WTC11 (cell line): ENCODE measurements at regions of chr10 and their contacts with region 1.

Region 1: GRCh38 chr10:102384053-102384452 is 11.5 kb upstream of the NFKB2 start:
- DNase-seq: peak; percentile 72
- ATAC-seq: peak; percentile 93
- H3K4me3 Mint-ChIP-seq: no peak overlapping the region
- H3K27ac Mint-ChIP-seq: no peak overlapping the region
- H3K4me1 Mint-ChIP-seq: no peaks in the 10 kb centered on the region
- H3K27me3 Mint-ChIP-seq: no peaks in the 10 kb centered on the region; the same call in 1 of the 2 replicates
- CTCF ChIP-seq: no peak

Region 2: GRCh38 chr10:102316421-102316820 is 67.6 kb before region 1 on chr10:
- CTCF ChIA-PET with region 1: no interaction called
- POLR2A ChIA-PET with region 1: no interaction called
- DNase-seq: no peak
- ATAC-seq: no peak
- H3K4me3 Mint-ChIP-seq: no peak overlapping the region
- H3K27ac Mint-ChIP-seq: no peak overlapping the region
- H3K4me1 Mint-ChIP-seq: peaks cover under 1% of the 10 kb centered on the region; the same call in 1 of the 2 replicates
- H3K27me3 Mint-ChIP-seq: no peaks in the 10 kb centered on the region; the same call in 1 of the 2 replicates
- CTCF ChIP-seq: no peak

Region 3: DNA sequence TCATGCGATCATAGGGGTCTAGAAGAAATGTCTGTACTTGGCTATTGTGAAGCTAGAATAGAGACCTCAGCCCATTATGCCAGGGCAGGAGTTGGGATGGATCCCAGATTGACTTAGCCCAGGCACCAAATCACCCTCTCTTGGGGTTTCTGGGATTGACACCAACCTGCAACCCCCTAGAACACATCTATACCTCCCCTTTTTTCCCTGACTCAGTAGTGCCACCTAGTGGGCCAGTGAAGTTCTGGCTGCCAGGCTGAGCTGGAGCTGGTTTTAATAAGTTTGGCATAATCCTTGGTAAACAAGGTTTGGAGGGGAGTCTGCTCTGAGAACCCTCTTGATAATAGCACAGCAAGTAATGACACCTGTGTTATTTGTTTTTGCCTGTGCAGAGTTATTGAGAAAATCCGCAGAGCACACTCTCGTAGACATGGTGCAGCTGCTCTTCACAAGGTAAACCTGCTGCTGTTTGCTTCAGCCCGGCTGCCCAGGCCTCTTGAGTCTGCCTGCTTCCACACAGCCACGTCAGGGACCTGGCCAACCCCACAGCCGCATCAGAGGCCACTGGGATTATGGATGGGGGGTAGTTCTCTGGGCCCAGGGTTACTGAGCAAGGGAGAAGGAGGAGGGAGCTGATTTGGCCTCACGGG is 31.9 kb before region 1 on chr10:
- CTCF ChIA-PET with region 1: interaction called, 26 read pairs
- POLR2A ChIA-PET with region 1: interaction called, 3 read pairs
- DNase-seq: peak; percentile 84
- ATAC-seq: peak; percentile 85
- H3K4me3 Mint-ChIP-seq: no peak overlapping the region
- H3K27ac Mint-ChIP-seq: no peak overlapping the region
- H3K4me1 Mint-ChIP-seq: no peaks in the 10 kb centered on the region
- H3K27me3 Mint-ChIP-seq: peaks cover 8% of the 10 kb centered on the region
- CTCF ChIP-seq: peak; percentile 94

Region 4: DNA sequence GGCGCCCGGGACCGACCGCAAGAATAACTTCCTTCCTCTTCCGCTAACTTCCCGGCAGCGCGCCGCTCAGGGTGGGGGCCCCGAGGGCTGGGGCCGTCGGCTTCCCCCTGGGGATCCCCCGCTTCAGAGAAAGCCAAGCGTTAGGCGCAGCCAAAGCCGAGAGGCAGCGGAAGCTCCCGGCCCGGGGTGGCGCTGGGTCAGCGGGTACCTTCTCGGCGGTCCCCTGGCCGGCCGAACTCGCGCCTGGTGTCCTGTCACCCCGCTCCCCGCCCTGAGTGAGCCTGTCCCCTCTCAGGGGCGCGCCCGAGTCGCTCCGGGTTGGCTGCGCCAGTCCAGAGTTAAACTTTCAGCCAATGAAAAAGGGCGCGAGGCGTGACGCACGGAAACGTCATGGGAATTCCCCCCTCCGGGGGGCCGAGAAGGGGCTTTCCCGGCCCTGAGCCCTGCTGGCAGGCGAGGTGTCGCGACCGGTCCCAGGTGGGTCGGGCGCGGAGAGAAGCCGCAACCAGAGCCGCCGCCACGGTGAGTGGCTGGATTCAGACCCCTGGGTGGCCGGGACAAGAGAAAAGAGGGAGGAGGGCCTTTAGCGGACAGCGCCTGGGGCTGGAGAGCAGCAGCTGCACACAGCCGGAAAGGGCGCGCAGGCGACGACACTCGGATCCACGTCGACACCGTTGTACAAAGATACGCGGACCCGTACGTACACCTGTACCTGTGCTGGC is 10.2 kb after region 1 on chr10:
- CTCF ChIA-PET with region 1: interaction called, 50 read pairs
- POLR2A ChIA-PET with region 1: no interaction called
- DNase-seq: peak; percentile 93
- ATAC-seq: peak; percentile 81
- H3K4me3 Mint-ChIP-seq: peak overlapping the region; percentile 75
- H3K27ac Mint-ChIP-seq: peak overlapping the region; percentile 12; the same call in 1 of the 2 replicates
- H3K4me1 Mint-ChIP-seq: peaks cover 18% of the 10 kb centered on the region
- H3K27me3 Mint-ChIP-seq: peaks cover 41% of the 10 kb centered on the region
- CTCF ChIP-seq: no peak; the same call in none of the 2 replicates

Region 5: GRCh38 chr10:102408728-102409603 is 24.9 kb after region 1 on chr10:
- CTCF ChIA-PET with region 1: interaction called, 14 read pairs
- POLR2A ChIA-PET with region 1: no interaction called
- DNase-seq: peak; percentile 55
- ATAC-seq: peak; percentile 29
- H3K4me3 Mint-ChIP-seq: peak overlapping the region; percentile 69
- H3K27ac Mint-ChIP-seq: no peak overlapping the region
- H3K4me1 Mint-ChIP-seq: peaks cover 30% of the 10 kb centered on the region
- H3K27me3 Mint-ChIP-seq: peaks cover 67% of the 10 kb centered on the region
- CTCF ChIP-seq: no peak

Region 6: GRCh38 chr10:102485093-102485784 is 101.2 kb after region 1 on chr10:
- CTCF ChIA-PET with region 1: interaction called, 20 read pairs
- POLR2A ChIA-PET with region 1: no interaction called
- DNase-seq: no peak
- ATAC-seq: no peak
- H3K4me3 Mint-ChIP-seq: no peak overlapping the region
- H3K27ac Mint-ChIP-seq: no peak overlapping the region
- H3K4me1 Mint-ChIP-seq: no peaks in the 10 kb centered on the region
- H3K27me3 Mint-ChIP-seq: no peaks in the 10 kb centered on the region
- CTCF ChIP-seq: no peak